Panc1 (cell line): ENCODE measurements at regions of chr7 and their contacts with region 1.

Region 1: GRCh38 chr7:42198974-42199668 is 37.9 kb downstream of the GLI3 start:
- DNase-seq: no peak
- ATAC-seq: no peak
- H3K4me3 ChIP-seq: no peak overlapping the region
- H3K27ac ChIP-seq: no peak overlapping the region
- H3K4me1 ChIP-seq: no peaks in the 10 kb centered on the region
- H3K27me3 ChIP-seq: no peaks in the 10 kb centered on the region
- CTCF ChIP-seq: no peak

Region 2: GRCh38 chr7:42247301-42247700 is 48.2 kb after region 1 on chr7:
- CTCF ChIA-PET with region 1: no interaction called
- POLR2A ChIA-PET with region 1: interaction called, 10 read pairs
- in situ Hi-C with region 1: no loop called
- intact Hi-C with region 1: no loop called
- DNase-seq: no peak
- ATAC-seq: no peak
- H3K4me3 ChIP-seq: no peak overlapping the region
- H3K27ac ChIP-seq: no peak overlapping the region
- H3K4me1 ChIP-seq: no peaks in the 10 kb centered on the region
- H3K27me3 ChIP-seq: no peaks in the 10 kb centered on the region
- CTCF ChIP-seq: no peak